IMR-90 (cell line): ENCODE measurements at regions of chr1 and their contacts with region 1.

Region 1: DNA sequence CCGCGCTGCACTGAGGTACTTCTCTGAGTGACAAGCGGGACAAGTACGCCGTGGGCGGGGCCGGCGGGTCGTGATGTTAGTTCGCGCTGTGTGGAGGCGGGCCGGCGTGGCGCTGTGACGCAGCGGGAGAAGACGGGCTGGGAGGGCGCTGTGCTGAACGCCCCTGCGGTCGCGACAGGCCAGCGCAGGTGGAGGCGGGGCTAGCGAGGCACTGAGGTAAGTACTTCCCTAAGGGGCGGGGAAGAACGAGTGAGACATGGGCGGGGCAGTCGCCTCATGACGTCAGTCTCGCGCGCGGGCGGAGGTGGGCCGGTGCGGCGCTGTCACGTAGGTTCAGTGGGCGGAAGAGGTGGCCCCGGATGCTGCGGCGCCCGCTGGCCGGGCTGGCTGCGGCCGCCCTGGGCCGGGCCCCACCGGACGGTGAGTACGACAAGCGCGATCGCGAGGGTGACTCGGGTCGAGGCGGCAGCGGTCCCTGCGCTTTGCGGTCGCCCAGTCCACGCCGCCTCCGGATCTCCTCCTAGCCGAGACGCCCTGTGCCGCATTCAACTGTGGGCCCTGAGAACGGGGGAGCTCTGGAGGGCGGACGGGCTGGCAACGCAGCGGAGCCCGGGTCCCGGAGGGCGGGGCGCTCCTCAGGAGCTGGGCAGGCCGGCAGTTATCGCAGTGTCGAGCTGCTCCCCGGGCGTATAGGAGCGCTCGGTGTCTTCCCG is at the start of gene GUK1:
- DNase-seq: peak; percentile 99
- ATAC-seq: peak; percentile 95
- H3K4me3 ChIP-seq: peak within 1 kb of the TSS; percentile 84
- H3K27ac ChIP-seq: peak within 1 kb of the TSS; percentile 87
- H3K4me1 ChIP-seq: peaks cover 19% of the 10 kb centered on the region
- H3K27me3 ChIP-seq: peaks cover 5% of the 10 kb centered on the region
- CTCF ChIP-seq: 0 out of 2 replicates have a peak, but pooled peaks have one; percentile 24
- POLR2A ChIP-seq: peak; percentile 97
- RAD21 ChIP-seq: no peak
- total RNA-seq, gene GUK1: 465 and 524 TPM in 2 replicates

Region 2: GRCh38 chr1:228013935-228014930 is 125.9 kb before region 1 on chr1:
- CTCF ChIA-PET with region 1: no interaction called
- POLR2A ChIA-PET with region 1: no interaction called
- dilution Hi-C with region 1: no loop called
- in situ Hi-C with region 1: no loop called
- intact Hi-C with region 1: no loop called
- DNase-seq: peak; percentile 38
- ATAC-seq: peak; percentile 33
- H3K4me3 ChIP-seq: no peak overlapping the region
- H3K27ac ChIP-seq: no peak overlapping the region
- H3K4me1 ChIP-seq: peaks cover 5% of the 10 kb centered on the region
- H3K27me3 ChIP-seq: peaks cover 26% of the 10 kb centered on the region
- CTCF ChIP-seq: no peak
- POLR2A ChIP-seq: no peak
- RAD21 ChIP-seq: no peak

Region 3: DNA sequence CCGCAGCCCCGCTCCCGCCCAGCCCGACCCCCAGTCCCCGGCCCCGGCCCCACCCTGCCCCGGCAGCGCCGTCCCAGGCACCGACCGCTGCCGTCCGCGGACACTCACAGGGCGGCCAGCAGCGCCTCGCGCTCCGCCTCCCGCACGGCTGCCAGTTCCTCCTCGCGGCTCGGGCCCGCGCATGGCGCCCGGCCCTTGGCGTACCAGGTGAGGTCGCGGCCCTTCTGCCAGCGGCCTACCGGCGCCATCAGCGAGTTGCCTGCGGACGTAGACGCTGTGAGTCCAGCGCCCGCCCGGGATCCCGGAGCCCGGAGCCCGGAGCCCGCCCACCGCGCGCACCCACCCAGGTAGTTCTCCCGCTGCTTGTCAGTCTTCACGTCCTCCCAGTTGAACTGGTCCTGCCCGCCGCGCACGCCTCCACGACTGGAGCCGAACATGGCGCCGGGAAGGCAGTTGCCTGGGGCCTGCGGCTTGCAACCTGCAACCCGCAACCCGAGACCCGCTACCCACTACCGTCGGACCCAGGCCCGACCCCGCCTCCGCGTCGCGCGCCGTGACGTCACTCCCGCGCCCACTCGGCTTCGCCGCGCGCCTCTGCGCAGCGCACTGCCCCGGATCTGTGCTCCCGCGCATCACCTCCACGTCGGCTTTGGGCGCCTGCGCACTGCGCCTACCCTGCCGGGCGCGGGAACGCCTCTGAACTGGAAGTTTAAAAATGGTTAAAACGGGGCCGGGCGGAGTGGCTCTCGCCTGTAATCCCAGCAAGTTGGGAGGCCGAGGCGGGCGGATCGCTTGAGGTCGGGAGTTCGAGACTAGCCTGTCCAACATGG is 37.1 kb before region 1 on chr1 and contains the start of gene C1orf35:
- CTCF ChIA-PET with region 1: no interaction called
- POLR2A ChIA-PET with region 1: no interaction called
- dilution Hi-C with region 1: no loop called
- in situ Hi-C with region 1: no loop called
- intact Hi-C with region 1: loop called (anchors 5 kb)
- DNase-seq: peak; percentile 88
- ATAC-seq: peak; percentile 92
- H3K4me3 ChIP-seq: peak within 1 kb of the TSS; percentile 62
- H3K27ac ChIP-seq: peak within 1 kb of the TSS; percentile 49; the same call in 1 of the 2 replicates
- H3K4me1 ChIP-seq: peaks cover 7% of the 10 kb centered on the region; the same call in 1 of the 2 replicates
- H3K27me3 ChIP-seq: no peaks in the 10 kb centered on the region
- CTCF ChIP-seq: no peak
- POLR2A ChIP-seq: no peak
- RAD21 ChIP-seq: no peak
- total RNA-seq, gene C1orf35: 4.3 and 4.7 TPM in 2 replicates

Region 4: DNA sequence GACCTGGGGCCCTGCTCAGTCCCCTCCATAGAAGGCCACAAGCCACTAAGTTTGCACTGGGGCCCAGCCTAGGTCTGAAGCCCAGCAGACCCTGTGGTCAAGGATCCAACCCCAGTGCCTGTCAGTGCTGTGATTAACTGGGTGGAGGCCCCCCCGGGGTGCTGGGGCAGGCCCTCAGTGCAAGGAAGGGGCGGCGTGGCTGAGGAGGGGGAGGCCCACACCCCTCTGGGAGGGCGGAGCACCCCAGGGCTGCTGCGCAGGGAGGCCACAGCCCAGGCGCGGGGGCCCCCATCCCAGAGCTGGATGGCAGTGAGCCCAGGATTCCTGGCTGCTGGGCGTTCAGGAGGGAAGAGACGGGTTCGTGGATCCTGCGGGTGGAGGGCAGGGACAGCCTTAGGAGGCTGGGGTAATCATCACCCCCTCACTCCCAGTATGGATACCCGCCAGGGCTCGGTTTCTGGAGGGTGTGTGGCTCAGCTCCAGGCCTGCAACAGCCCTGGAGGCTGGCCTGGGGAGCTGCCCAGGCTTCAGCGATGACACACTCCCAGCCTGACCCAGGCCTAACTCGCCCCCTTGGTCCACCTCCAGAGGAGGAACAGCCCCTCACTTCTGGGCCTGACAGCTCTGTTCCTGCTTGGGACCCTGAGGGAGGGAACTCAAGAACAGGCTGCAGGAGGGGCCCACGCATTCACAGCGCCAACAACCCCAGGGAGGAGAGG is 10.5 kb after region 1 on chr1:
- CTCF ChIA-PET with region 1: no interaction called
- POLR2A ChIA-PET with region 1: interaction called, 3 read pairs
- dilution Hi-C with region 1: no loop called
- in situ Hi-C with region 1: no loop called
- intact Hi-C with region 1: loop called (anchors 1 kb)
- DNase-seq: peak; percentile 86
- ATAC-seq: peak; percentile 74
- H3K4me3 ChIP-seq: no peak overlapping the region
- H3K27ac ChIP-seq: peak overlapping the region; percentile 74
- H3K4me1 ChIP-seq: peaks cover 23% of the 10 kb centered on the region
- H3K27me3 ChIP-seq: no peaks in the 10 kb centered on the region
- CTCF ChIP-seq: 0 out of 2 replicates have a peak, but pooled peaks have one; percentile 4
- POLR2A ChIP-seq: peak; percentile 48
- RAD21 ChIP-seq: peak; percentile 17; the same call in 1 of the 2 replicates

Region 5: GRCh38 chr1:228275739-228276421 is 135.8 kb after region 1 on chr1:
- CTCF ChIA-PET with region 1: no interaction called
- POLR2A ChIA-PET with region 1: no interaction called
- dilution Hi-C with region 1: no loop called
- in situ Hi-C with region 1: no loop called
- intact Hi-C with region 1: loop called (anchors 10 kb)
- DNase-seq: peak; percentile 82
- ATAC-seq: peak; percentile 98
- H3K4me3 ChIP-seq: peak overlapping the region; percentile 78
- H3K27ac ChIP-seq: peak overlapping the region; percentile 80
- H3K4me1 ChIP-seq: peaks cover 8% of the 10 kb centered on the region
- H3K27me3 ChIP-seq: no peaks in the 10 kb centered on the region
- CTCF ChIP-seq: no peak
- POLR2A ChIP-seq: no peak
- RAD21 ChIP-seq: no peak

Region 6: DNA sequence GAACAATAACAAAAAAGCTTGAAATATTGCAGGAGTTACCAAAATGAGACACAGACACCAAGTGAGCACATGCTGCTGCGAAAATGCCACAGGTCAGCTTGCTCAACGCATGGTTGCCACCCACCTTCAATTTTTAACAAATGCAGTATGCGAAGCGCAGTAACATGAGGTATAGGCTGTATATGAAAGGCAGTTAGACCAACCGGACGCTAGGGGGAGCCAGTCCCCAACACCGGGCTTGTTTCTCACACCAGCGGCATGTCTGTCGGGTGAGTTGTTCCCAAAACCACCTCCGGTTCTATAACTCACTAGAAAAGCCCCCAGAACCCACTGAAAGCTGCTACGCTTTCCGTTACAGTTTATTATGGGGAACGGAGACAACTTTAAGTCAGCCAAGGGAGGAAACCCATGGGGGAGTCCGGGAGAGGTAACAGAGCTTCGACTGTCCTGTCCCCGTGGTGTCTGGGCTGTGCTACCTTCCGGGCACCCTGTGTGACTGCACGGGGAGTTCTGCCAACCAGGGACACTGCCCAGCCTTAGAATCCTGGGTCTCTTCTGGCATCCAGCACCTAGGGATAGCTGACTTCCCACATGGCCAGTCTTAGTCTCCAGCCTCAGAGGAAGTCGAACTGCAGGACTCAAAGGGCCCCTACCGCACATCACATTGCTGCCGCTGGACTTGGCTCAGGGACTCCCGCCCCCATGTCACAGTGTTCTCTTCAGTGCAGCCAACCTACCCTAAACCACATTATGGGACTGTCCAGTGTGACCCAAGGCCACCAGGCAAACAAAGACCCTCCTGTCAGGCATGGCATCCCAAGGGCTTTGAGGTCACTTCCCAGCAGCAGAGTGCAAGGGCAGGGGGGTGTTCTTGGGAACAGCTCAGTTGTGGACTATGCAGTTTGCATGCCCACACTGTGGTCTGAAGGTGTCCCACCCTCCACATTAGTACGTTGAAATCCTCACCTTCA is 361.1 kb after region 1 on chr1:
- CTCF ChIA-PET with region 1: no interaction called
- POLR2A ChIA-PET with region 1: no interaction called
- dilution Hi-C with region 1: no loop called
- in situ Hi-C with region 1: loop called (anchors 10 kb)
- intact Hi-C with region 1: no loop called
- DNase-seq: peak; percentile 86
- ATAC-seq: peak; percentile 98
- H3K4me3 ChIP-seq: no peak overlapping the region
- H3K27ac ChIP-seq: no peak overlapping the region
- H3K4me1 ChIP-seq: no peaks in the 10 kb centered on the region
- H3K27me3 ChIP-seq: peaks cover 3% of the 10 kb centered on the region; the same call in 1 of the 2 replicates
- CTCF ChIP-seq: peak; percentile 92
- POLR2A ChIP-seq: 0 out of 2 replicates have a peak, but pooled peaks have one; percentile 26
- RAD21 ChIP-seq: peak; percentile 77